Psoas muscle (tissue), 8 donors: ENCODE measurements at regions of chr1 and their contacts with region 1.

Region 1: GRCh38 chr1:46179138-46180081 is 3.1 kb upstream of the P3R3URF start:
- DNase-seq: peak; percentile 62 to 79
- ATAC-seq: peak; percentile 66 to 74 (median 70)
- H3K4me3 ChIP-seq: peak overlapping the region; percentile 28
- H3K27ac ChIP-seq: peak overlapping the region; percentile 63
- H3K4me1 ChIP-seq: peaks cover 35% of the 10 kb centered on the region
- H3K27me3 ChIP-seq: no peaks in the 10 kb centered on the region
- CTCF ChIP-seq: peak; percentile 91

Region 2: GRCh38 chr1:46132529-46133180 is 46.8 kb before region 1 on chr1 and contains the start of gene PIK3R3:
- intact Hi-C with region 1: loop called (anchors 2 kb)
- DNase-seq: peak; percentile 98 to 99
- ATAC-seq: peak; percentile 94 to 99 (median 96)
- H3K4me3 ChIP-seq: peak within 1 kb of the TSS; percentile 80
- H3K27ac ChIP-seq: peak within 1 kb of the TSS; percentile 96
- H3K4me1 ChIP-seq: peaks cover 36% of the 10 kb centered on the region
- H3K27me3 ChIP-seq: peaks cover 0 to 4% (median 0%) of the 10 kb centered on the region in 3 donors
- CTCF ChIP-seq: no peak
- total RNA-seq, gene PIK3R3: 17.3 to 24.2 (median 21.2) TPM

Region 3: DNA sequence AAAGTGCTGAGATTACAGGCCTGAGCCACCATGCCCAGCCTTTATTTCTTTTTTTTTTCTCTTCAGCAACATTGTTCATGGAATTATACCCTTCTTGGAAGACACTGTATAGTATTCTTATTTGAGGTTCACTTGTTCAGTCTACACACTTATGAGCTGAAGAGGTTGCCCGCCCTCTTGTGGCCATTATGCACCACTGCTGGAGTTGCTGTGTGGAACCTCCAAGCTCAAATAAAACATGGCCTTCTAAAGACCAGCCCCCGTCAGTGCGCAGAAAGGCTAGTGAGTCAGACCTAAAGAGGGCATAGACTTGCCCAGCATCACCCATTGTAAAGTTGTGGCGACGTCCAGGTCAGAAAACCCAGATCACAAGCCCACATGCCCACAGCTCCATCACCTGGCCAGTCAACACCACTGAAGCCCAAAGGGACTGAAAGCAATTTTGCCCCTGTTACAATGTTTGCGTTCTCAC is 44.1 kb after region 1 on chr1:
- intact Hi-C with region 1: loop called in 1 of 2 experiments (anchors 2 kb)
- DNase-seq: peak; percentile 56 to 75
- ATAC-seq: peak; percentile 90 to 98 (median 94)
- H3K4me3 ChIP-seq: no peak overlapping the region
- H3K27ac ChIP-seq: no peak overlapping the region
- H3K4me1 ChIP-seq: peaks cover 4% of the 10 kb centered on the region
- H3K27me3 ChIP-seq: no peaks in the 10 kb centered on the region
- CTCF ChIP-seq: peak; percentile 90